ENCODE measurements at regions of chr3 and their contacts with region 1.

Region 1: DNA sequence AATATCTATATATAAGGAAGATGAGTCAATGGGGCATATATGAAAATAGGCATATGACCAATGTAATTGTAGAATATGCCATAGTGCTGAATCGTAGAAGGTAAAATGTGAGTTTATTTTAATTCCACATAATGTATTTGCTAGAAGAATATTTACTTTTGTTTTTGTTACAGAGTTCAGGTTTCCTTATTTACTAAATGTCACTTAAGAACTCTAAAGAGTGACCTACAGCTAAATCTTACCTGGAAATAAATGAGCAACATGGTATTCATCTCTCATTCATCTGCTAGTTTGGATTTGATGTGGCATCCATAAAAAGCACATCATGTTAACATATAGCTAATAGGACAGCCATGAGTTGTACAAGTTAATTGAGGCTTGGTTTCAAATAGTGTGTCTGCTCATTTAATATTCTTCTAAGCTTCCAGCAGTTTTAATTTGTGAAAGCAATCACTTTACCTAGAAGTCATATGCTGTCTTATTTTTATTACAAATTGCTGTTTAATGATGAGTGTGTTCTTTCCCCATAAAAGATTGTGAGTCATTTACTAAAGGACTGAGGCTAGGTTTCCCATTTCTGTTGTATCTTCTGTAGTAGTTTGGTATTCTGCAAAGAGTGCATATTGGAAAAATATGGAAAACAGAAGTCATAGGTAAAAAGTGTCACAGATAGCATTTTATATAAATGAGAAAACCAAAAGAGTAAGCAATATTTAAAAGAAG is 222.1 kb upstream of the POU1F1 start:
- DNase-seq: no peak
- ATAC-seq: no peak
- H3K4me3 ChIP-seq: no peak overlapping the region
- H3K27ac ChIP-seq: no peak overlapping the region
- H3K4me1 ChIP-seq: no peaks in the 10 kb centered on the region
- H3K27me3 ChIP-seq: no peaks in the 10 kb centered on the region
- CTCF ChIP-seq: no peak

Region 2: GRCh38 chr3:87350364-87351199 is 147.9 kb before region 1 on chr3:
- intact Hi-C with region 1: loop called in 1 of 3 experiments (anchors 10 kb)
- DNase-seq: peak in 1 of 6 donors; percentile 11
- ATAC-seq: peak; percentile 92 to 97 (median 96)
- H3K4me3 ChIP-seq: no peak overlapping the region
- H3K27ac ChIP-seq: no peak overlapping the region
- H3K4me1 ChIP-seq: peaks cover 15 to 25% (median 16%) of the 10 kb centered on the region in 3 donors
- H3K27me3 ChIP-seq: no peaks in the 10 kb centered on the region
- CTCF ChIP-seq: peak; percentile 74 to 92 (median 86)

Region 3: DNA sequence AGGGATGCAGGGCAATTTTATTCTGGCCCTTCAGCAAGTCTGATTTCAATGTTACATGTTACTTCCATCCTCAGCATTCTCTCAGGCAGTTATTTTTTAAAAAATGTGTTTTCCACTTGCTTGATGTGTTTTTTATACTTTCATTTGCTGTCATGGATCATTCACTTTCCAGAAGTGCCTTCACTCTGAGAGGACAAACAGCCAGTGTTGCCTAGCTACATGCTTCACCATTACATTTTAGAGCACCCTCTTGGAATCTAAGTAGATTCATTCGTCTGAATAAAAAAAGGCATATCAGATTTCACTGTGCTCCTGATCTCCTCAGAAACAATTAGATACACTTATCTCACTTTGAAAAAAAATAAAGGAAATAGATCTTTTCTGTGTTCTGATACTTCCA is 128.5 kb before region 1 on chr3:
- intact Hi-C with region 1: no loop called
- DNase-seq: no peak
- ATAC-seq: no peak
- H3K4me3 ChIP-seq: no peak overlapping the region
- H3K27ac ChIP-seq: no peak overlapping the region
- H3K4me1 ChIP-seq: no peaks in the 10 kb centered on the region
- H3K27me3 ChIP-seq: no peaks in the 10 kb centered on the region
- CTCF ChIP-seq: no peak